ENCODE measurements at regions of chrX and their contacts with region 1.

Region 1: DNA sequence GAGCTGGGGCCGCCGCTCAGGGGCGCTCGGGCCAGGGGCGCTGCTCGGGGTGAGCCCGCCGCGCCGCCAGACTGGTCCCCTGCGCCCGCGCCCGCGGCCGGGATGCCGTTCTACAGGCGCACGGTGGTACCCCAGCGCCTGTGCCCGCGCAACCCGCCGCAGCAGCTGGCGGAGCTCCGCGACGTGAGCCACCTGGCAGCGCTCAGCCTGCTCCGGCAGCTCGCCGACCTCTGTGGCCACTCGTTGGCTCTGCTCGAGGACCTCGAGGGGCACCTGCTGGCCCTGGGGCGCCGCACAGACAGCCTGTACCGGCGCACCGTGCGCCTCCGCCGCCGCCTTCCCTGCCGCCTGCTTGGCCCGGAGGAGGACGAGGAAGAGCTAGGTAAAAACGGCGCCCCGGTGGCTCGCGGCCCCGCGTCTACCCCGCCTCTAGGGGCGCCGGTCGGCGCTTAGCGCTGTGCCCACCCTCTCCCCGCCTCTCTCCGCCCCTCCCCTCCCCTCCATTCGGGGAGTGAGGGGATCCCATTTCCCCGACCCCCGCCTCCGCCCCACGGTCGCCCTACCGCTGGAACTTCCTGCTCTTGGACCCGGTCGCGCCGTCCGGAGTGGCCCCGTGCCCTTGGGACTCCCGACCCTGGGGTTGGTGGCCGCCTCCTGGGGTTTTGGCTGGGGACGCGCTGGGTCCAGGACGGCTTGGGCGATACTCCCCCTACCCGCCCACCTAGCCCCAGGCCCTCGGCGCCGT is 513 bp downstream of the NHSL2 start:
- DNase-seq: peak; percentile 38
- H3K4me3 Mint-ChIP-seq: peak overlapping the region; percentile 26
- H3K27ac Mint-ChIP-seq: no peak overlapping the region
- H3K4me1 Mint-ChIP-seq: peaks cover 2% of the 10 kb centered on the region
- H3K27me3 Mint-ChIP-seq: peaks cover 21% of the 10 kb centered on the region

Region 2: GRCh38 chrX:71870208-71871098 is 40.7 kb before region 1 on chrX:
- CTCF ChIA-PET with region 1: no interaction called
- POLR2A ChIA-PET with region 1: no interaction called
- intact Hi-C with region 1: loop called (anchors 5 kb)
- DNase-seq: no peak
- H3K4me3 Mint-ChIP-seq: no peak overlapping the region
- H3K27ac Mint-ChIP-seq: no peak overlapping the region
- H3K4me1 Mint-ChIP-seq: peaks cover 26% of the 10 kb centered on the region
- H3K27me3 Mint-ChIP-seq: peaks cover 25% of the 10 kb centered on the region